Activated naive CD4-positive, alpha-beta T cell treated with anti-CD3 and anti-CD28 coated beads, Interleukin-2, amount 10 ng/mL, durations not matched to agents 7 days and 5 days (primary cell): ENCODE measurements at regions of chr6 and their contacts with region 1.

Region 1: DNA sequence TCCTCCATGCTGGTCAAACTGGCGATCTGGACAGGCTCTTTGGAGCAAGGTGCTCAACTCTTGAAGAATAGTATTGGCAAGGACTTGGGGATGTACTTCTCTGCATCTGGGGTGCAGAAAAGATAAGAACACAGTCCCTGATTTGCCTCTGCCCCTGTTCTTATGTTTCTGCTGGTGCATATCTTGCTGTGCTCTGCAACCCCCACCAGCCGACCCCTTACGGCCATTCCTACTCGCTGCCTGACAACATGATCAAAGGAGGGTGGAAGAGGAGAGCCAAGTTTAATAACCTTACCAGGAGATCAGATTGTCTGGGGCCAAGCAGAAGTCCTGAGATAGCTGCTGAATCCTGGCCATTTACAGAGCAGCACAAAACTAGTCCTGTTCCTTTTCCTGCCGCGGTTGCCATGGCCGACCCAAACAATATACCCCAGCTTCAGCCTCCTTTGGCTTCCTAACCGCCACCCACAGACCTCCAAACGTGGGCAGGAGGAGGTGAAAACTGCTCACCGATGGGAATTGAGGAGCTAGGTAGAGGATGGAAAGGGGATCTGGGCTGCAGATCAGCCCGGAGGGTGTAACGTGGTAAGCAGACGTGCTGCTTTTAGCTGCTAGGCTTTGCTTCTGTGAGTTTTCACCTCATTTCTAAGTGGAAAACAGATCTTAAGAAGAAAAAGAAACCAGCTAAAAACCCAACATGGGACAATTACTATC is 60.9 kb downstream of the ATXN1 start:
- DNase-seq: peak; percentile 37
- H3K4me3 Mint-ChIP-seq: peak overlapping the region; percentile 14
- H3K27ac Mint-ChIP-seq: peak overlapping the region; percentile 71
- H3K4me1 Mint-ChIP-seq: peaks cover 59% of the 10 kb centered on the region
- H3K27me3 Mint-ChIP-seq: no peaks in the 10 kb centered on the region

Region 2: GRCh38 chr6:16731478-16732051 is 31.2 kb after region 1 on chr6:
- CTCF ChIA-PET with region 1: interaction called, 20 read pairs
- DNase-seq: peak; percentile 65
- H3K4me3 Mint-ChIP-seq: peak overlapping the region; percentile 46
- H3K27ac Mint-ChIP-seq: peak overlapping the region; percentile 86
- H3K4me1 Mint-ChIP-seq: peaks cover 52% of the 10 kb centered on the region
- H3K27me3 Mint-ChIP-seq: no peaks in the 10 kb centered on the region

Region 3: DNA sequence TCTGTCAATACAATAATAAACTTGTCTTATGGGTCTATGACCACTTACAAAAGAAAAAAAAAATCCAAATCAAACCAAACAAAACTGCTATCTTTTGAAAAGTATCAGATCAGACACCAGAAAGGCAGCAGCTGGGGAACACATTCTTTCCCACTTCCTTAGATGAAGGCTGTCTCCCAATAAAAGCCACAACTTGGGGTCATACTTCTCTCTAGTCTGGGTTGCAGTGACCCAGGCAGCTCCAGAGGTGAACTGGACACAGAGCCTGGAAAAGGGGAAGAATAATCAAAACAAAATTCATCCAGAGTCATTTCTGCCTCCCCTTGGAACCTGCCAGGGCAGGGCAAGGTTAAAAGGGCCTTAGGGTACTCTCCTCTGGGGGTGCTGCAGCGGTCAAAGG is 41.8 kb after region 1 on chr6:
- CTCF ChIA-PET with region 1: no interaction called
- DNase-seq: no peak
- H3K4me3 Mint-ChIP-seq: no peak overlapping the region
- H3K27ac Mint-ChIP-seq: no peak overlapping the region
- H3K4me1 Mint-ChIP-seq: peaks cover 38% of the 10 kb centered on the region
- H3K27me3 Mint-ChIP-seq: no peaks in the 10 kb centered on the region

Region 4: DNA sequence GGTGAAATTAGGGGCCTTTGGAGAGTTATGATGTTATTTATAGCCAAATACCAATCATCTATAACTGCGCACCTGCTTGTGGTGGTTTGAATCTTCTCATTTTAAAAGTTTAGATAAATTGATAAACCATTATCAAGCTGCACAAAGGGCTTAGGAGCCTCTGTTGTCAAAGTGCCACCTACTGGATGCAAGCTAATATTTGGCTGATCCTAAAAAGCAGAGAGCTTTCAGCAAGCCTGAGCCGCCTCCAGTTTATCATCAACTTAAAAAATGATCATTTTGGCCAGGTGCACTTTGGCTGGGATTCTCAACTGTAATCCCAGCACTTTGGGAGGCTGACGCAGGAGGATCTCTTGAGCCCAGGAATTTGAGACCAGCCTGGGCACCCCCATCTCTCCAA is 119.4 kb after region 1 on chr6:
- CTCF ChIA-PET with region 1: no interaction called
- DNase-seq: no peak
- H3K4me3 Mint-ChIP-seq: no peak overlapping the region
- H3K27ac Mint-ChIP-seq: no peak overlapping the region
- H3K4me1 Mint-ChIP-seq: no peaks in the 10 kb centered on the region
- H3K27me3 Mint-ChIP-seq: peaks cover 14% of the 10 kb centered on the region

Region 5: GRCh38 chr6:16991981-16992629 is 291.7 kb after region 1 on chr6:
- CTCF ChIA-PET with region 1: no interaction called
- DNase-seq: no peak
- H3K4me3 Mint-ChIP-seq: no peak overlapping the region
- H3K27ac Mint-ChIP-seq: no peak overlapping the region
- H3K4me1 Mint-ChIP-seq: no peaks in the 10 kb centered on the region
- H3K27me3 Mint-ChIP-seq: peaks cover 7% of the 10 kb centered on the region